ENCODE measurements at regions of chr1 and their contacts with region 1.

Region 1: GRCh38 chr1:24391882-24392603 is 21.5 kb downstream of the STPG1 start:
- DNase-seq: peak; percentile 58 to 74
- ATAC-seq: peak; percentile 86 to 93 (median 88)
- H3K4me3 ChIP-seq: peak overlapping the region; percentile 20
- H3K27ac ChIP-seq: peak overlapping the region; percentile 73
- H3K4me1 ChIP-seq: peaks cover 4% of the 10 kb centered on the region
- H3K27me3 ChIP-seq: no peaks in the 10 kb centered on the region
- CTCF ChIP-seq: peak; percentile 74

Region 2: DNA sequence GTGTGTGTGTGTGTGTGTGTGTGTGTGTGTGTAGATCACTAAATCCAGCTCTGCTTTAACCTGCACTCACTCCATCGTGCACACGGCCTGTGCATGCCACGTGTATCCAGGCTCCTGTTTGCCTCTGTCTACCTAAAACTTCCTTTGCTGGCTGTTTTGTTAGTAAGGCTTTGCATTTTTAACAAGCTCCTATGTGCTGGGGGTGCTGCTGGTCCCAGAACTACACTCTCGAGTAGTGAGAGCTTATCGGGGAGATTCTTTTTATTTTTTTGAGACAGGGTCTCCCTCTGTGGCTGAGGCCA is 966.9 kb before region 1 on chr1:
- intact Hi-C with region 1: no loop called
- DNase-seq: no peak
- ATAC-seq: no peak
- H3K4me3 ChIP-seq: peak overlapping the region; percentile 75
- H3K27ac ChIP-seq: peak overlapping the region; percentile 92
- H3K4me1 ChIP-seq: peaks cover 32% of the 10 kb centered on the region
- H3K27me3 ChIP-seq: no peaks in the 10 kb centered on the region
- CTCF ChIP-seq: no peak

Region 3: DNA sequence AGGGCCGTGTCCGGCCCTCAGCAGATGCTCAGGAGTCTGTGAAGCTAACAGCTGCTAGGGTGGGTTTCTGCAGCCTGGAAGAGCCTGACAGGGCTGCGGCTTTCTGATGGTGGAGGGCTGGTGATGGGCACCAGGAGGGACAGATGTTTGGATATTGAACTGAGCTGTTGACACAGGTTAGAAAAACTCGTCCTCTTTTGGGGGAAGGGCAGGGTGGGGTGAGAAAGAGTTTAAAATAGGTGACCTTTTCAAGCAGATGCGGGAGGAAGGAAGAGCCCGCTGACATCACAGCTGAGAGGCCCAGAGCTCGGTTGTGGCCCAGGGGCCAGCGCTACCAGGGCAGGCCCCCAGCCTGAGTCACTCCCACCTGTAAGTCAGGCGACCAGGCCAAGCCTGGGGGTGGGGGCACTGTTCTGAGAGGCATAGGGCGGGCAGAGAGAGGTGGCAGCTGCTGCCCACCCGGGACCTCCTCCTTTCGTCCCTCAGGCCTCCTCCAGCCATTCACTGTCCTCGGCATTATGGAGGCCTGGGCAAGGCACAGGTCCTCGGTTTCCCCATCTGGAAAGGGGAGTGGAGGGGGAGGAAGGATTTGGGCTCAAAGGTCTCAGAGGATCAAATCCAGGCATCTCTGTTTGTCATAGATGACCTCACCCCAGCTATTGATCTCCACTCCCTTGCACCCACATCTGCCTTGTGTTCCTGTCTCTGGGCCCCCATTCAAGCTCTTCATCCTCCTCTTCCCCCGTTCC is 800.4 kb before region 1 on chr1:
- intact Hi-C with region 1: no loop called
- DNase-seq: peak; percentile 26 to 62
- ATAC-seq: peak; percentile 41 to 54 (median 50)
- H3K4me3 ChIP-seq: no peak overlapping the region
- H3K27ac ChIP-seq: peak overlapping the region; percentile 71
- H3K4me1 ChIP-seq: peaks cover 33% of the 10 kb centered on the region
- H3K27me3 ChIP-seq: no peaks in the 10 kb centered on the region
- CTCF ChIP-seq: no peak

Region 4: DNA sequence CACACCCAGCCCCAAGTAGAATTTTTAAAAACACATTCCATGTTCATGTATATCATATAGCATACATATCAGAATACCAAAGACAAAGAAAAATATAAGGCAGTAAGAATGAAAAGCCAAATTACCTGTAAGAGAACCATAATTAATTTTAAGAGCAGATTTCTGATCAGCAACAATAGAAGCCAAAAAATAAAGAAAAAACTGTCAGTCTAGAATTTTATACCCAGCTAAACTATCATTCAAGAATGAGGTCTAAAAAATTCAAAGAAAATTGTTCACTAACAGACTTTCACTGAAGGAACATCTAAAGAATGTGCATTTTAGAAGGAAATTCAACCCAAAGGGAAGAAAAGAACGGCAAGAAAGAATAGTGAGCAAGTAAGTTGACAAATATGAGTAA is 513.4 kb before region 1 on chr1:
- intact Hi-C with region 1: no loop called
- DNase-seq: no peak
- ATAC-seq: no peak
- H3K4me3 ChIP-seq: no peak overlapping the region
- H3K27ac ChIP-seq: no peak overlapping the region
- H3K4me1 ChIP-seq: no peaks in the 10 kb centered on the region
- H3K27me3 ChIP-seq: no peaks in the 10 kb centered on the region
- CTCF ChIP-seq: no peak

Region 5: GRCh38 chr1:24070821-24071393 is 321.1 kb before region 1 on chr1:
- intact Hi-C with region 1: loop called in 1 of 2 experiments (anchors 5 kb)
- DNase-seq: peak; percentile 75 to 85
- ATAC-seq: peak; percentile 69 to 81 (median 74)
- H3K4me3 ChIP-seq: no peak overlapping the region
- H3K27ac ChIP-seq: peak overlapping the region; percentile 1
- H3K4me1 ChIP-seq: no peaks in the 10 kb centered on the region
- H3K27me3 ChIP-seq: no peaks in the 10 kb centered on the region
- CTCF ChIP-seq: peak; percentile 88

Region 6: GRCh38 chr1:24150234-24151174 is 241.5 kb before region 1 on chr1:
- intact Hi-C with region 1: loop called (anchors 2 to 5 kb)
- DNase-seq: peak; percentile 88 to 92
- ATAC-seq: peak; percentile 95 to 98 (median 96)
- H3K4me3 ChIP-seq: peak overlapping the region; percentile 41
- H3K27ac ChIP-seq: no peak overlapping the region
- H3K4me1 ChIP-seq: no peaks in the 10 kb centered on the region
- H3K27me3 ChIP-seq: no peaks in the 10 kb centered on the region
- CTCF ChIP-seq: peak; percentile 82

Region 7: DNA sequence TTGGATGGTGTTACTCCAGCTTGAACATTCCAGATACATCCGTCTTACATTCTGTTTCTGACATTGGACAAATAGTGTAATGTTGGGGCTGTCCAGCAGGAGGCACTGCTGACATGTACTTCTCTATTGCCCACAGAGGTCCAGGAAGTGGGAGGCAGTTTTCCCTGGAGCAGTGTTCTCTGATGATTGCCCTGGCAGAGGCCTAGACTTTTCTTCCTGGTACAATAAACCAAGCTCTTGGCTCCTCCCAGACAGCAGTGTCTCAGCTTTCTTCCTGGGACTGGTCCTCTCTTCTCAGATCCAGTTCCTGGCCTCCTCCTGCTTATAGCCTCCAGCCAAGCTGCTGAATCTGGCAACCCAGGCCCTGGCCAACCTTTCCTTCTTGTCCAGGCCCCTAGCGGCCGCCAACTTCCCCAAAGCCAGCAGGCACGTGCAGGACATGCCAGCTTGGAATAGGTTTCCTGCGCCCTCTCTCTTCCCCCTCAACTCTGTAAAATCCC is 190.1 kb before region 1 on chr1:
- intact Hi-C with region 1: loop called (anchors 1 to 2 kb)
- DNase-seq: peak; percentile 72 to 76
- ATAC-seq: peak; percentile 80 to 87 (median 85)
- H3K4me3 ChIP-seq: no peak overlapping the region
- H3K27ac ChIP-seq: no peak overlapping the region
- H3K4me1 ChIP-seq: no peaks in the 10 kb centered on the region
- H3K27me3 ChIP-seq: peaks cover 0 to 6% (median 0%) of the 10 kb centered on the region in 3 donors
- CTCF ChIP-seq: peak; percentile 81

Region 8: GRCh38 chr1:24491577-24492360 is 99.7 kb after region 1 on chr1:
- intact Hi-C with region 1: no loop called
- DNase-seq: no peak
- ATAC-seq: no peak
- H3K4me3 ChIP-seq: no peak overlapping the region
- H3K27ac ChIP-seq: no peak overlapping the region
- H3K4me1 ChIP-seq: no peaks in the 10 kb centered on the region
- H3K27me3 ChIP-seq: peaks cover 0 to 26% (median 3%) of the 10 kb centered on the region in 3 donors
- CTCF ChIP-seq: no peak